ENCODE measurements at regions of chr10 and their contacts with region 1.

Region 1: DNA sequence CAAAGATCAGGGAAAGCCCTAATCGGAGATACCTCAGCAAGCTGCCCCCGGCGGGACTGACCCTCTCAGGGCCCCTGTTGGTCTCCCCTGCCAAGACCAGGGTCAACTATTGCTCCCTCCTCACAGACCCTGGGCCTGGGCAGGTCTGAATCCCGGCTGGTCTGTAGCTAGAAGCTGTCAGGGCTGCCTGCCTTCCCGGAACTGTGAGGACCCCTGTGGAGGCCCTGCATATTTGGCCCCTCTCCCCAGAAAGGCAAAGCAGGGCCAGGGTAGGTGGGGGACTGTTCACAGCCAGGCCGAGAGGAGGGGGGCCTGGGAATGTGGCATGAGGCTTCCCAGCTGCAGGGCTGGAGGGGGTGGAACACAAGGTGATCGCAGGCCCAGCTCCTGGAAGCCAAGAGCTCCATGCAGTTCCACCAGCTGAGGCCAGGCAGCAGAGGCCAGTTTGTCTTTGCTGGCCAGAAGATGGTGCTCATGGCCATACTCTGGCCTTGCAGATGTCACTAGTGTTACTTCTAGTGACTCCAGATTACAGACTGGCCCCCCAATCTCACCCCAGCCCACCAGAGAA is 24.1 kb downstream of the TBATA start:
- DNase-seq: no peak

Region 2: DNA sequence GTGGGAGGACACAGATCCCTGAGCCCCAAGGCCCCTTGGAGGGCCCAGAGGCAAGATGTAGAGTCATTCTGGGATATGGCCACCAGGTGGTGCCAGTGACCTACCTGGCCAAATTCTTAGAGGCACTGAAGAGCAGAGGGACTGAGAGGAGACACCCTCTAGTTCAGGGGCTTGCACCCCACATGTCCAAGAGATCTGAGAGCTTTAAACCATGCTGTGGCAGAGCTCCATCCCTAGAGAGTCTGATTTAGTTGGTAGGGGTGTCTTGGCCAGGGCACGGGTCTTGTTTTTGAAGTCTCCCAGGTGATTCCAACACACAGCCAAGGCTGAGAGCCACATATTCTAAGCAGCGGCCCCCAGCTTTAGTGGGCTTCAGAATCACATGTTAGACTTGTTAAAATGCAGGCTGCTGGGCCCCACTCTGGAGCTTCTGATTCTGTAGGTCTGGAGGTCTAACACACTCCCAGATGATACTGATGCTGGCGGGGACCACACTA is 211.1 kb before region 1 on chr10:
- in situ Hi-C with region 1: loop called (anchors 10 kb)
- DNase-seq: peak; percentile 83

Region 3: DNA sequence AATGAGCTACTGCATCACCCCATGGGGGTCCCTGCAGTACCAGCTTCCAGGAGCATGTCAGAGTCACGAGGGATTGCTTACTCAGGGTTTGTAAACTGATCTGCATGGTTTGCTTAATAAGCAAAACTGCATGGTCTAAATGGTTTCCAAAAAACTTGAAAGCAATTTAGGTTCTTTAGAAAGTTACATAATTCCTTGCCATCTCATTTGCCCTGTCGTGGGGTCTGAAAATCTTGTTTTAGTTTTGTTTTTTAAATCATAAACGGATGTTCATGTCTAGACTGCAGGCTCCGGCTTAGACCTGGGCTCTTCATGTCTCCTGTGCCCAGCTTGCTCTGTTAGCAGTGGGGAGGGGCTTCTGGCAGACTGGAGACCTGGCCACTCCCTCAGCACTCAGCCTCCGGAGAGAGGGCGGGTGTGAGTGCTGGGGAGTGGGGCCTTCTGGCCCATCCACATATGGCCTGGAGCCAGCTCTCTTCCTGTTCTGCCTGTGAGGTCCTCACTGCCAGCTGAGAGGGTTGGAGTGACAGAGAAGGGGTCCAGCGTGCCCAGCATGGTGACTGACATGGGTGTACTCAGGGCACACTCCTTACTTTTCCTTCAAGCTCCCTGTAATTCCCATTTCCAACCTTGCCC is 176.1 kb before region 1 on chr10:
- in situ Hi-C with region 1: no loop called
- DNase-seq: peak; percentile 77